Activated CD4-positive, alpha-beta memory T cell treated with anti-CD3 and anti-CD28 coated beads for 36 hours (primary cell): ENCODE measurements at regions of chr10 and their contacts with region 1.

Region 1: GRCh38 chr10:95246579-95247051 is 44.2 kb downstream of the PDLIM1 start:
- DNase-seq: peak; percentile 67
- H3K4me3 Mint-ChIP-seq: no peak overlapping the region
- H3K27ac Mint-ChIP-seq: no peak overlapping the region
- H3K4me1 Mint-ChIP-seq: peaks cover 15% of the 10 kb centered on the region
- H3K27me3 Mint-ChIP-seq: peaks cover 16% of the 10 kb centered on the region

Region 2: DNA sequence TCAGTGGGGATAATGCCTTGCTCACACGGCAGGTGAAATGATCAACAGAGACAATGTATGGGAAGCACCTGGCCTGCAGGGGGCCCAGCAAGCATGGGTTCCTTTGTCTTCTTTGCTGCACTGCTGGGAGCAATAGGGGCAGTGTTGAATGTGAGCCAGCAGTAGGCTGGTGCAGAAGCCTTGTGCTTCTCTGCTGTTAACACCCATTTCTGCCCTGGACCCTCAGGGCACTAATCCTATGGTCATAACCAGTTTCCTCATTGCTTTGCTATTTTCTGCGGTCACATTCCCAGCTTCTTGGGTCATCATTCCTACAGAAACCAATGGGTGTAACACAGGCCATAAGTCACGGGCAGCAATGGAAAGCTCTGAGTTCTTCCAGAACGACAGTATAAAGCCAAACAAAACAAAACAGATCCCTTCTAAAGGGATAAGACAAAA is 1499.8 kb before region 1 on chr10:
- CTCF ChIA-PET with region 1: no interaction called
- POLR2A ChIA-PET with region 1: no interaction called
- intact Hi-C with region 1: no loop called
- DNase-seq: peak; percentile 20
- H3K4me3 Mint-ChIP-seq: no peak overlapping the region
- H3K27ac Mint-ChIP-seq: no peak overlapping the region
- H3K4me1 Mint-ChIP-seq: peaks cover 3% of the 10 kb centered on the region
- H3K27me3 Mint-ChIP-seq: peaks cover 5% of the 10 kb centered on the region

Region 3: DNA sequence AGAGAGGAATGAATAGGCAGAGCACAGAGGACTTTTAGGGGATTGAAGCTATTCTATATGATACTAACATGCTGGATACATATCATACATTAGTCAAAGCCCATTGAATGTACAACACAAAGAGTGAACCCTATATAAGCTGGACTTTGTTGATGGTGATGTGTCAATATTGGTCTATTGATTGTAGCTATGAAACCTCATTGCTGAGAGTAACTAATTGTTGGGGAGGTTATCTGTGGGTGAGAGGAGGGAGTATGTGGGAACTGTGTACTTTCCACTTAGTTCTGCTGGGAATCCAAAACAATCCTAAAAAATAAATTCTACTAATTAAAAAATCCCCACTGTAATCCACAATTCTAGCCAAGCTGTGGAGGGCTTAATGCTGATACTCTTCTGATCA is 330.2 kb before region 1 on chr10:
- CTCF ChIA-PET with region 1: no interaction called
- POLR2A ChIA-PET with region 1: no interaction called
- intact Hi-C with region 1: no loop called
- DNase-seq: no peak
- H3K4me3 Mint-ChIP-seq: no peak overlapping the region
- H3K27ac Mint-ChIP-seq: no peak overlapping the region
- H3K4me1 Mint-ChIP-seq: no peaks in the 10 kb centered on the region
- H3K27me3 Mint-ChIP-seq: no peaks in the 10 kb centered on the region

Region 4: GRCh38 chr10:95026461-95026860 is 220.2 kb before region 1 on chr10:
- CTCF ChIA-PET with region 1: no interaction called
- POLR2A ChIA-PET with region 1: no interaction called
- intact Hi-C with region 1: no loop called
- DNase-seq: no peak
- H3K4me3 Mint-ChIP-seq: no peak overlapping the region
- H3K27ac Mint-ChIP-seq: no peak overlapping the region
- H3K4me1 Mint-ChIP-seq: no peaks in the 10 kb centered on the region
- H3K27me3 Mint-ChIP-seq: no peaks in the 10 kb centered on the region

Region 5: GRCh38 chr10:95133016-95133752 is 113.4 kb before region 1 on chr10:
- CTCF ChIA-PET with region 1: interaction called, 26 read pairs
- POLR2A ChIA-PET with region 1: no interaction called
- intact Hi-C with region 1: loop called (anchors 1 kb)
- DNase-seq: peak; percentile 81
- H3K4me3 Mint-ChIP-seq: no peak overlapping the region
- H3K27ac Mint-ChIP-seq: no peak overlapping the region
- H3K4me1 Mint-ChIP-seq: no peaks in the 10 kb centered on the region
- H3K27me3 Mint-ChIP-seq: peaks cover 1% of the 10 kb centered on the region

Region 6: DNA sequence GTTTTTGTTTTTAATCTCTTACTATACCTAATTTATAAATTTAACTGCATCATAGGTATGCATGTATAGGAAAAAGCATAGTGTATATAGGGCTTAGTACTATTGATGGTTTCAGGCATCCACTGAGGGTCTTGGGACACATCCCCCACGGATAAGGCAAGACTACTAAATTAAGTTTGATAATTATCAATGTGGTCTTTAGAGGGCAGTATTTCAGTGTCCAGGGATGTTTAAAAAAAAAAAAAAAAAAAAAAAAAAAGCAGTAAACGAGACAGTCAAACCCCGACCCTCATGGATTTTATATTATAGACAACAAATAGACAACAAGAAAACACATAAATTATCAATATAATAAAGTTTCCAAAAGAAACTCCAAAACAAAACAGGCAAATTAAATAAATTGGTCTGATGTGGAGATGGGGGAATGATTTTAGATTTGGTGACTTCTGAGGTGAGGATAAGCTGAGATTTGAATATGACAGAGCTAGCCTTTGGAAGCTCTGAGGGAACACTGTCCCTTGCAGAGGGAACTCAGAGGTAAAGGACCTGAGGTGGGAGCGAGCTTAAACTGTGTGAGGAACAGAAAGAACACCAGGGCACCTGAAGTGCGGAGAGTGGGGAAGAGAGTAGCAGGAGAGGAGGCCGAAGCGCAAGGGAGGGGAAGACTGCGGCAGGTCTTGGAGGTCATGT is 37.8 kb before region 1 on chr10:
- CTCF ChIA-PET with region 1: interaction called, 15 read pairs
- POLR2A ChIA-PET with region 1: no interaction called
- intact Hi-C with region 1: loop called (anchors 2 kb)
- DNase-seq: no peak
- H3K4me3 Mint-ChIP-seq: no peak overlapping the region
- H3K27ac Mint-ChIP-seq: no peak overlapping the region
- H3K4me1 Mint-ChIP-seq: no peaks in the 10 kb centered on the region
- H3K27me3 Mint-ChIP-seq: peaks cover 8% of the 10 kb centered on the region

Region 7: GRCh38 chr10:95236068-95236903 is 10.3 kb before region 1 on chr10:
- CTCF ChIA-PET with region 1: interaction called, 20 read pairs
- POLR2A ChIA-PET with region 1: interaction called, 4 read pairs
- intact Hi-C with region 1: loop called (anchors 1 kb)
- DNase-seq: peak; percentile 38
- H3K4me3 Mint-ChIP-seq: peak overlapping the region; percentile 16
- H3K27ac Mint-ChIP-seq: peak overlapping the region; percentile 88
- H3K4me1 Mint-ChIP-seq: peaks cover 27% of the 10 kb centered on the region
- H3K27me3 Mint-ChIP-seq: peaks cover 12% of the 10 kb centered on the region

Region 8: GRCh38 chr10:95363303-95363912 is 116.8 kb after region 1 on chr10:
- CTCF ChIA-PET with region 1: interaction called, 218 read pairs
- POLR2A ChIA-PET with region 1: no interaction called
- intact Hi-C with region 1: loop called (anchors 1 kb)
- DNase-seq: peak; percentile 28
- H3K4me3 Mint-ChIP-seq: no peak overlapping the region
- H3K27ac Mint-ChIP-seq: no peak overlapping the region
- H3K4me1 Mint-ChIP-seq: no peaks in the 10 kb centered on the region
- H3K27me3 Mint-ChIP-seq: peaks cover 6% of the 10 kb centered on the region

Region 9: DNA sequence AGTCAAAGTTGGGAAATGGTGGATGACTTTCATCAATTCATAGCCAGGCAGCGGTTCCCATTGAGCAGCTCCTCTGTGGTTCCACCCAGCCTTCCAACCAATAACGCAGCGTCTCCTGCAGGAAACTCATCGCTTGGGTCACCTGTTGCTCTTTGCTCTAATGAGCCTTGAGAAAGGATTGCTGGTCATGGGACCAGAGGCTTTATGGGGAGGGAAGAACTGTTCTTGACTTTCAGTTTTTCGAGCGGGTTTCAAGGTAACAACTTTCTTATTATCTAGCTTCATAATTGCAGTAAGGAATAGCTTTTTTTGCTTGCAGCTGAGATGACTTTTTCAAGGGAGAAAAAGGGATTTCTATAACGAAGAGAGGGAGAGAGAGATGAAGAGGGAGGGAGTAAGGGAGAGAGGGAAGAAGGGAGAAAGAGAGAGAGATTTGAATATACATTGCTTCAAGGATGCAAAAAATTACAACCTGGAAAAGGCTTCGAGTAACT is 508.9 kb after region 1 on chr10:
- CTCF ChIA-PET with region 1: no interaction called
- POLR2A ChIA-PET with region 1: no interaction called
- intact Hi-C with region 1: no loop called
- DNase-seq: no peak
- H3K4me3 Mint-ChIP-seq: peak overlapping the region; percentile 42
- H3K27ac Mint-ChIP-seq: no peak overlapping the region
- H3K4me1 Mint-ChIP-seq: peaks cover 15% of the 10 kb centered on the region
- H3K27me3 Mint-ChIP-seq: peaks cover 28% of the 10 kb centered on the region